Dendritic cell treated with granulocyte-macrophage colony-stimulating factor and Interleukin-4, amounts not matched to agents 40 ng/mL and 50 ng/mL, for 4 days (primary cell): ENCODE measurements at regions of chr10 and their contacts with region 1.

Region 1: GRCh38 chr10:99630439-99630838 is 10.2 kb upstream of the SLC25A28 start:
- H3K4me3 Mint-ChIP-seq: no peak overlapping the region
- H3K27ac Mint-ChIP-seq: no peak overlapping the region
- H3K4me1 Mint-ChIP-seq: no peaks in the 10 kb centered on the region
- H3K27me3 Mint-ChIP-seq: no peaks in the 10 kb centered on the region

Region 2: GRCh38 chr10:99698504-99699080 is 68.2 kb after region 1 on chr10:
- intact Hi-C with region 1: loop called (anchors 5 kb)
- H3K4me3 Mint-ChIP-seq: no peak overlapping the region
- H3K27ac Mint-ChIP-seq: no peak overlapping the region
- H3K4me1 Mint-ChIP-seq: peaks cover 4% of the 10 kb centered on the region
- H3K27me3 Mint-ChIP-seq: no peaks in the 10 kb centered on the region